MCF 10A (cell line): ENCODE measurements at regions of chr17 and their contacts with region 1.

Region 1: DNA sequence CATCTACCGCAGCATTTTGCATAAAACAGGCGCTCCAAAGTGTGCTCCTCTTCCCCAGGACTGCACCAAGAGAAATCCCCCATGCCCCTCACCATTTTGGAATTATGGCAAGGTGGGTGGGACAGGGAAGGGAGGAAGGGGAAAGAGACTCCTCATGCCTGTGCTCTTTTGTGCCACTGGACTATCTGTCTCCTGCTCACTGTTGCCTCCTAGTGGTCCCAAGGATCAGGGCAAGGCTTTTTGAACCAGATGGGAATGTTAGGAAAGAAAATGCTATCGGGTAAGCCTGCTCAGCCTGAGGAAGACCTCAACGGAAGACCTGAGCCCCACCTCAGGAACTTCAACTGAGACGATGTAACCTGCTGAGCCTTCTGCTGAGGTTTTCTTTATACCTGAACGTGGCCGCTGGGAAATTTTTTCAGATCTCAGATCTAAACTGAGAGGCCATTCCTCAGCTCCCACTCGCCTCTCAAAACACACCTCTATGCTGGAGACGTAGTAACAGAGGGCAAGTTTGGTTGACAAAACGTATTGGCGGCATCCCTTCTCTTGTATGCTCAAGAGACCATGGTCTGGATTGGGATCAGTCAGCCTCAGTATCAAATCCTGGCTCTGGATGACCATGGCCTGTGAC is 58.3 kb downstream of the SPACA3 start:
- DNase-seq: peak; percentile 79
- H3K4me3 Mint-ChIP-seq: no peak overlapping the region
- H3K27ac Mint-ChIP-seq: no peak overlapping the region
- H3K4me1 Mint-ChIP-seq: no peaks in the 10 kb centered on the region
- H3K27me3 Mint-ChIP-seq: no peaks in the 10 kb centered on the region
- CTCF ChIP-seq: peak; percentile 84

Region 2: DNA sequence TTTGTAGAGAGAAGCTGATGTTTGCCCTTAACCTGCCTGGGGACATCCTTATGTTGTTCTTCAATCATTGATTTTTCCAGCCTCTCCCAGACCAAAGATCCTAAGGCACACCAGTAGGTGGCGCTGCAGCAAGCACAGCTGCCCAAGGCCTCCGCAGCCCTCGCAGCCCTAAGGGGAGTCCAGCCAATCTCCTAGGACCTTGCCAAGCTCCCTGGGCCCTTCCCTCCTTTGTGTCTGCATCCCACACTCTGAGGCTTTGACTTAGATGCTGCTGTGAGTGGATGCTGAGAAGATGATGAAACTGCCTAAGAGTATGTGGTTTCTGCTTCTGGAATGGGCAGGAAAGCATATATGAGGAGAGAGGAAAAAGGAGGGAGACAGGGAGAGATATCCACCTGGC is 11.2 kb before region 1 on chr17:
- CTCF ChIA-PET with region 1: interaction called, 10 read pairs
- POLR2A ChIA-PET with region 1: no interaction called
- intact Hi-C with region 1: no loop called
- DNase-seq: peak; percentile 65
- H3K4me3 Mint-ChIP-seq: no peak overlapping the region
- H3K27ac Mint-ChIP-seq: no peak overlapping the region
- H3K4me1 Mint-ChIP-seq: peaks cover 36% of the 10 kb centered on the region
- H3K27me3 Mint-ChIP-seq: no peaks in the 10 kb centered on the region
- CTCF ChIP-seq: peak; percentile 70